ENCODE measurements at regions of chr3 and their contacts with region 1.

Region 1: DNA sequence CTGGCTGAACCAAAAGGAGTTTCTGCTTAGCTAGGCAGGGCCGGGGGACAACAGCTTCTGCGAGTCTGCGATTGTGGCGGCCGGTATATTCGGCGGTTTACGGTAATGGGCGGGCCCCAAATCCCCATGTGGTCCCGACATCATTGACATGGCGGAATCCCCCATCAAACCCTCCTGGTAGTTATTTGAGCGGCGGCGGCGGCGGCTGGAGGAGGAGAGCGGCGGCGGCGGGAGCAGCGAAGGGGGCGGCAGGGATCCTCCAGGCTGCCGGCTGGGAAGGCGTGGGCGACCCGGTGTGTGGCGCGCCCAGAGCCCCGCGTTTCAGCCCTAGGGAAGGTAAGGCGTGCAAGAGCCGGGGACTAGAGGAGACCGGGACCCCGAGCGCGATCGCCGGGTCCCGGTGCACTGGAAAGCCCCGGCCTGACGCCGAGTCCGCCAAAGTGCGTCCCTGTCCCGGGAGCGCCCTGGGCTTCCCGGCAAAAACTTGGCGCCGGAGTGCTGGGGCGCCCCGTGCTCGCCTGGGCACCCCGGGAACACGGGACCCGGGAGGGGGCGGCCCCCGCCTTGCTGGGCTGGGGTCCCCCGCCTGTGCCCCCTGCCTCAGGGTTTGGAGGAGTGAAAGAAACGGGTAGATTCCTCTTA is at the start of gene FNDC3B:
- DNase-seq: peak; percentile 92 to 96
- ATAC-seq: peak; percentile 85 to 94 (median 91)
- H3K4me3 ChIP-seq: peak within 1 kb of the TSS; percentile 87 to 100 (median 95)
- H3K27ac ChIP-seq: peak within 1 kb of the TSS; percentile 98 to 100 (median 99)
- H3K4me1 ChIP-seq: peaks cover 0 to 46% (median 38%) of the 10 kb centered on the region in 9 donors
- H3K27me3 ChIP-seq: no peaks in the 10 kb centered on the region
- CTCF ChIP-seq: no peak
- total RNA-seq, gene FNDC3B: 65.6 to 118 (median 89.0) TPM

Region 2: GRCh38 chr3:171838218-171838761 is 201.3 kb before region 1 on chr3:
- intact Hi-C with region 1: loop called in 4 of 10 experiments (anchors 2 to 10 kb)
- DNase-seq: peak; percentile 39 to 72
- ATAC-seq: peak; percentile 75 to 85 (median 78)
- H3K4me3 ChIP-seq: peak overlapping the region in 7 of 10 donors; percentile 6 to 36 (median 23)
- H3K27ac ChIP-seq: peak overlapping the region; percentile 53 to 84 (median 78)
- H3K4me1 ChIP-seq: peaks cover 3 to 84% (median 64%) of the 10 kb centered on the region in 9 donors
- H3K27me3 ChIP-seq: no peaks in the 10 kb centered on the region
- CTCF ChIP-seq: peak in 1 of 9 donors; percentile 27

Region 3: GRCh38 chr3:171994646-171995428 is 44.7 kb before region 1 on chr3:
- intact Hi-C with region 1: no loop called
- DNase-seq: no peak
- ATAC-seq: no peak
- H3K4me3 ChIP-seq: no peak overlapping the region
- H3K27ac ChIP-seq: no peak overlapping the region
- H3K4me1 ChIP-seq: no peaks in the 10 kb centered on the region
- H3K27me3 ChIP-seq: no peaks in the 10 kb centered on the region
- CTCF ChIP-seq: no peak

Region 4: DNA sequence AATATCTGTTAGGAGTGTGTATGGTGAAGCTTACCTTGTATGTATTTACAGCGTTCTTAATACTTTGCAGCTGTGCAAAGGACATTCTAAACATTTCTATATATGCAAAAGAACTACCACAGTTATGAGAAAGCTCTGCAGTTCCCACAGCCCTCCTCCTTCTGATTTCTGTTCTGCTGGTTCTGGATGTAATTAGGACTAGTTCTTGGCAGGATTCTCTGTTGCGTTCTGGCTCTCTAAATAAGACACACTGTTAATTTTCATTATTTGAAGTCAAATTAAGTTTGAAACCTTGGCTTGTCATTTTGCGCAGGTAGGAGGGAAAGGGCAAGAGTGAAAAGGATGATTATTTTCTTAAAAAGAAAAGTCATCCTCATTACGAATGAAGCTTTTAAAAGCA is 76.2 kb after region 1 on chr3:
- intact Hi-C with region 1: loop called in 3 of 10 experiments (anchors 10 kb)
- DNase-seq: no peak
- ATAC-seq: no peak
- H3K4me3 ChIP-seq: no peak overlapping the region
- H3K27ac ChIP-seq: peak overlapping the region in 1 of 10 donors; percentile 25
- H3K4me1 ChIP-seq: peaks cover 0 to 50% (median 12%) of the 10 kb centered on the region in 9 donors
- H3K27me3 ChIP-seq: no peaks in the 10 kb centered on the region
- CTCF ChIP-seq: no peak

Region 5: DNA sequence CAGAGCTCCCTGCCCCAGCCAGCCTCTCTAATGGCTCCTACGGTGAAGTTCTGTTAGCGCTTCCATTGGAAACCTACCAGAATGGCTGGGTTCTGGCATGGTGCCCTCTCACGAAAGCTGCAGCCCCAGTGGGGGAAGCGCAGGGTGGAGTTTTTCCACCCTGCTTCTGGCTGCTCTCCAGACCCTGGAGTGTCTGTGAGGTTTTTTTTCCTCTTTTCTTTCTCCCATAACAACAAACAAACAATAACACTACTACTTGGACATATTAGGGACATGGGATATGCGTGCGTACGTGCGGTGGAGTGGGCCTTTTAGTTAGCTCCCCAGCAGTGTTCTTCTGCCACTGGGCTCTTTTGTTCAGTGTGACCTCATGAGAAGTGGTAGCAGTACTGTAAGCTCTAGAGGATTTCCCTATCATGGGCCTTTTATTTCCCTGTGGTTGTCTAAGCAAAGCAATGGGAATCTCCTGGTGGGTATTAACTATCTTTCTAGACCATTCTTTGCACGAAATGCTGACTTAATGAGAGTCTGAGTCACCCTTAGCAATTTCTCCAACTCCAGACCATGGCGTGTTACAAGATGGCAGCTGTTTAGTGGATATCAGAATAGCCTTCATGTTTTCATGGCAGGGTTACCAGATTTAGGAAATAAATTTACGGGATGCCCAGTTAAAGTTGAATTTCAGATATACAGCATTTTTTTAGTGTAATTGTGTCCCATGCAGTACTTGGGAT is 161.7 kb after region 1 on chr3:
- intact Hi-C with region 1: loop called in 4 of 10 experiments (anchors 2 to 10 kb)
- DNase-seq: peak; percentile 88 to 92
- ATAC-seq: peak; percentile 87 to 95 (median 90)
- H3K4me3 ChIP-seq: peak overlapping the region in 4 of 10 donors; percentile 2 to 22 (median 6)
- H3K27ac ChIP-seq: peak overlapping the region; percentile 69 to 92 (median 82)
- H3K4me1 ChIP-seq: peaks cover 11 to 83% (median 60%) of the 10 kb centered on the region in 9 donors
- H3K27me3 ChIP-seq: no peaks in the 10 kb centered on the region
- CTCF ChIP-seq: no peak

Region 6: DNA sequence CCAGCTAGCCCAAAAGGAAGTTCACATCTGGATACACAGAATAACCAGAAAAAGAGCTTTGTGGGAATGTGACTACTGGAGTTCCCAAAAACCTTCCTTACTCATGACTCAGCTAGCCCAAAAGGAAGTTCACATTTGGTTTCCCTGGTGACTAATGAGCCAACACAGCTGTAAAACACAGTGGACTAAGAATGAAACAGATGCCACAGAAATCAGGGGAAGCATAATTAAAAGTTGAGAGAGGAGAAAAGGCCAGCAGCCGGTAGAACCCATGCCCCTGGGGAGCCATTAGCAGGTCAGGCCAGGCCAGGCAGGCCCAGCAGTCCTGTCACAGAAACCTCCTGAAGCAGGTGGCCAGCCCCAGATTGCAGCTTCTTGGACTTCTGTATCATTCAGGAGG is 278.4 kb after region 1 on chr3:
- intact Hi-C with region 1: loop called in 5 of 10 experiments (anchors 5 to 10 kb)
- DNase-seq: peak; percentile 50 to 78
- ATAC-seq: peak; percentile 45 to 86 (median 74)
- H3K4me3 ChIP-seq: no peak overlapping the region
- H3K27ac ChIP-seq: peak overlapping the region; percentile 52 to 88 (median 80)
- H3K4me1 ChIP-seq: peaks cover 12 to 100% (median 91%) of the 10 kb centered on the region in 9 donors
- H3K27me3 ChIP-seq: no peaks in the 10 kb centered on the region
- CTCF ChIP-seq: no peak